ENCODE measurements at regions of chr17 and their contacts with region 1.

Region 1: DNA sequence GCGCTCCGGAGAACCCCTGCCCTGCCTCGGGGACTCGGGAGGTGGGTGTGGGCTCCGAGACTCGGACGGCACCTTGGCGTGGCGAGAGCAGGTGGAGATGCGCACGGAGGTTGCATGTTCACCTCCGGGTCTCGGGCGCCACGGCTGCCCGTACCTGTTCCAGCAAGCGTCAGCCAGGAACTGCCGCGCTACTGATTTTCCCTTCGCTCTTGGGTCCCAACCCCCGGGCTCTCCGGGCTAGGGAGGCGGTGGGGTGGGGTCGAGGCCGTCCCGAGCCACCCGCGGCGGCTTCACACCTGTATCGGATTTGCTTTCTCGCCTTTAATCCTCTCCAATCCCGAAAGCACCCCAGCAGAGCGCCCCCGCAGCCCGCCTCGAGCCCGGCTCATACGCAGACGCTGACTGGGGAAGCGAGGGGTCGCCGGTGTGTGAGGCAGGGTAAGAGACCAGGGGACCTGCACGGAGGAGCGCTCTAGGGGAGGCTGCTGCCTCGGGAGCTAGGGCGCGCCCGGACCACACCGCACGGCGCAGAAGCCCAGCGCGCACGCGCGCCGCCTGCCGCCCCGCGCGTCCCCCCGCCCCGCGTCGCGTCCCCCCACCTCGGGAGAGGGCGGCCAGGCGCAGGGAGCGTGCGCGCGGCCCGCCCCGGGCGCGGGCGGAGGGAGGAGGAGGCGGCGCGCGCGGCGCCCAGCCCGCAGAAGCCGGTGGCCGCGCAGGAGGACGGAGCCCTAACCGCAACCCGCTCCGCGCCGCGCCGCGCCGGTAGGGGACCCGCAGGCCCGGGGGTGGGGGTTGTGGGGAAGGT is at the start of gene DUSP14:
- DNase-seq: peak; percentile 50 to 86
- H3K4me3 ChIP-seq: peak within 1 kb of the TSS; percentile 87
- H3K27ac ChIP-seq: peak within 1 kb of the TSS; percentile 91
- H3K4me1 ChIP-seq: peaks cover 55% of the 10 kb centered on the region
- H3K27me3 ChIP-seq: no peaks in the 10 kb centered on the region
- CTCF ChIP-seq: no peak
- total RNA-seq, gene DUSP14: 17.1 and 23.3 TPM in 2 replicates

Region 2: DNA sequence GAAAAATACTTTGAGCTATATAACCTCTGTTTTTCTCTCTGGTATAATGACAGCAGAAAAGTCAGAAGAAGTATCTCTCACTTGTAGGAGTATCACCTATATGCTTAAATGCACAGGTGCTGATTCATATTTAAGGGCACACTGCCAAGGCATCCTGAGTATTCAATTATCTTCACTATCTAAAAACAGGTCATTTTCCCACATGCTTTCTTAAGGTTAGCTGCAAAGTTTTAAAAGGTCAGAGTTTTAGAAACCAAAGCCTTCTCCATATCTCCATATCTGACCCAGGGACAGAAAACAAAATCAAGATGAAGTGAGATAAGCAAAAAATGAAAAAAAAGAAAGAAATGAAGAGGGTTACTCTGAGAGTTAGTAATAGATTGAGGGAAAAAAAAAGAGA is 212.9 kb before region 1 on chr17:
- CTCF ChIA-PET with region 1: no interaction called
- POLR2A ChIA-PET with region 1: interaction called, 10 read pairs
- intact Hi-C with region 1: no loop called
- DNase-seq: peak; percentile 49 to 88
- H3K4me3 ChIP-seq: no peak overlapping the region
- H3K27ac ChIP-seq: peak overlapping the region; percentile 74
- H3K4me1 ChIP-seq: peaks cover 51% of the 10 kb centered on the region
- H3K27me3 ChIP-seq: no peaks in the 10 kb centered on the region
- CTCF ChIP-seq: no peak

Region 3: DNA sequence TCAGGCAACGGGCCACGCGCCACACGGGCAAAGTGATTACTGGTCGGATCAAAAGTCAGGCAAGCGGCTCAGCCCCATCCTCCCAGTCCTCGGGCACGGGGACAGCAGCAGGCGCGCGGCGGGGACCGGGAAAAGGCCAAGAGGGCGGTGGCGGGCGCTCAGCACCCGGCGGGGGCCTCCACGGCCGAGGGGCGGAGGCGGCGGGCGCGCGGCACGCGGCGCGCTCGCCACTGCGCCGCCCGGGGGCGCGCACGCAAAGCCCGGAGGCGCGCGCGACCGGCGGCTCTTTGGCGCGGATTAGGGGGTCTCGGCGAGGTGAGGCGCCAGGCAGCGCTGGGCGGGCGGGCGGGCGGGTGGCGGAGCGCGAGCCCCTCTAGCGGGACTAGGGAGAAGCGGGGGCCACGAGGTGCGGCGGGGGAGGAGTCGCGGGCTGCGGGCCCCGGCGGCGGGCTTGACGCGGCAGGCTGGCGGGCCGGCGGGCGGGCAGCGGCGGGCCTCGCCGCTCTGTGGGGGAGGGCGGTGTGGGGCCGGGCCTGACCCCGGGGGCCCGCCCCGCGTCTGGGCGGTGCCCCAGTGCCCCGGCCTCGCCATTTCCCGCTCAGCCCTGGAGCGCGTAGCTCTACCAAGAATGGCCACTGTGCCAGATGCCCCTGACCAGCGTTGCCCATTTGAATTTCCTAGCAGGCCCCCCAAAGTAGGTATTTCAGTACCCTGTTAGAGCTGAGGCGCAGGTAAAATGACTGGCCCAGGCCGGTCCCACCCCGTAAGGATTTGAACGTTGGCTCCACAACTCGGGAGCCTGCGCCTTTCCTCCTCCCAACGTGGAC is 82.6 kb before region 1 on chr17 and contains the starts of genes ACACA and TADA2A:
- CTCF ChIA-PET with region 1: no interaction called
- POLR2A ChIA-PET with region 1: interaction called, 4 read pairs
- intact Hi-C with region 1: loop called (anchors 1 kb)
- DNase-seq: peak; percentile 59 to 81
- H3K4me3 ChIP-seq: peak within 1 kb of the TSS; percentile 100
- H3K27ac ChIP-seq: peak within 1 kb of the TSS; percentile 67
- H3K4me1 ChIP-seq: peaks cover 25% of the 10 kb centered on the region
- H3K27me3 ChIP-seq: no peaks in the 10 kb centered on the region
- CTCF ChIP-seq: 0 out of 2 replicates have a peak, but pooled peaks have one; percentile 17
- total RNA-seq, gene ACACA: 125 and 185 TPM in 2 replicates
- total RNA-seq, gene TADA2A: 24.6 and 25.2 TPM in 2 replicates

Region 4: GRCh38 chr17:37450112-37450511 is 39.3 kb before region 1 on chr17:
- CTCF ChIA-PET with region 1: no interaction called
- POLR2A ChIA-PET with region 1: interaction called, 4 read pairs
- intact Hi-C with region 1: loop called (anchors 1 kb)
- DNase-seq: peak; percentile 48 to 70
- H3K4me3 ChIP-seq: no peak overlapping the region
- H3K27ac ChIP-seq: peak overlapping the region; percentile 25
- H3K4me1 ChIP-seq: peaks cover 52% of the 10 kb centered on the region
- H3K27me3 ChIP-seq: no peaks in the 10 kb centered on the region
- CTCF ChIP-seq: no peak

Region 5: GRCh38 chr17:37476431-37477120 is 12.8 kb before region 1 on chr17:
- CTCF ChIA-PET with region 1: interaction called, 5 read pairs
- POLR2A ChIA-PET with region 1: interaction called, 8 read pairs
- intact Hi-C with region 1: loop called (anchors 1 kb)
- DNase-seq: peak; percentile 60 to 97
- H3K4me3 ChIP-seq: peak overlapping the region; percentile 15; the same call in 1 of the 2 replicates
- H3K27ac ChIP-seq: peak overlapping the region; percentile 95
- H3K4me1 ChIP-seq: peaks cover 46% of the 10 kb centered on the region
- H3K27me3 ChIP-seq: no peaks in the 10 kb centered on the region
- CTCF ChIP-seq: no peak

Region 6: GRCh38 chr17:37609170-37610040 is 120.0 kb after region 1 on chr17 and contains the start of gene SYNRG:
- CTCF ChIA-PET with region 1: no interaction called
- POLR2A ChIA-PET with region 1: no interaction called
- intact Hi-C with region 1: no loop called
- DNase-seq: peak; percentile 84 to 97
- H3K4me3 ChIP-seq: peak within 1 kb of the TSS; percentile 89
- H3K27ac ChIP-seq: peak within 1 kb of the TSS; percentile 42
- H3K4me1 ChIP-seq: peaks cover 16% of the 10 kb centered on the region
- H3K27me3 ChIP-seq: no peaks in the 10 kb centered on the region
- CTCF ChIP-seq: no peak; the same call in 1 of the 2 replicates
- total RNA-seq, gene SYNRG: 18.7 and 28.9 TPM in 2 replicates